Panc1 (cell line): ENCODE measurements at regions of chr9 and their contacts with region 1.

Region 1: DNA sequence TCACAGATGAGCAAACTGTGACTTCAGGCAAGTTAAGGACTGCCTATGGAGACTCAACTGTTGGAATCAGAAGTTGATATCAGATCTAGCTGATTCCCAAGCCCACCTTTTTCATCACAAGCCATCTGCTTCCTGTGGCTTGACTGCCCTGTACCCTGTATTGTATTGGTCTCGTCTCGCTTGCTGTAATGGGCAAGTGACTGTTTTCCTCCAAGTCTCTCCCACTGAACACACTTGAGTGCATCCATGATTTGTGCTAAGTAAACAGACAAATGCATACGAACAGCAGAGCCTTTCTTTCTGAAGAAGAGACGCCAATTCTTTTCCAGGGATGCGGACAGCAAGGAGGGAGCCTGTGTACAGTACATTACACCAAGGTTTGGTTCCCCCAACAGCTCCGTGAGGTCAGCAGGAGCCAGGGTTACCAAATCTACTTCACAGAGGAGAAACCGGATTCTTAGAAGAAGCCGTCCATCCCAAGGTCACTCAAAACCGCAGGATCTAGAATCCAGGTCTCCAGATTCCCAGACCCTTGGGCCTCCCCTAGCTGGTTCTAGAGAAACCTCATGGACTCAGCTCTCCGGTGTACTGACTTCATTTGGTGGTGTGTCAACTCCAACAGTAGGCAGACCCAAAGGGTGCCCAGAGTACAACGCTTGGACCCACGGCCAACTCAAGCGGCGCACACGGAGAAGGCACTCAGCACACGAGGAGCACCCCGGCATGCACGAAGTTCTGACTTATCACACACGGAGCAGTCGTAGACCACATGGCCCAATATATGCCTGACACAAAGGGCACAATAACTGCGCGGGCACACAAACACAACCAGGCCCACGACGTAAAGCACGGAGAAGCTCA is 1.1 kb downstream of the BAG1 start:
- DNase-seq: no peak
- ATAC-seq: peak; percentile 7
- H3K4me3 ChIP-seq: peak overlapping the region; percentile 92 to 96
- H3K27ac ChIP-seq: peak overlapping the region; percentile 92
- H3K4me1 ChIP-seq: peaks cover 15% of the 10 kb centered on the region
- H3K27me3 ChIP-seq: no peaks in the 10 kb centered on the region
- CTCF ChIP-seq: no peak

Region 2: GRCh38 chr9:33225319-33226149 is 37.8 kb before region 1 on chr9:
- CTCF ChIA-PET with region 1: interaction called, 15 read pairs
- POLR2A ChIA-PET with region 1: no interaction called
- in situ Hi-C with region 1: no loop called
- intact Hi-C with region 1: no loop called
- DNase-seq: peak; percentile 66
- ATAC-seq: peak; percentile 64
- H3K4me3 ChIP-seq: no peak overlapping the region
- H3K27ac ChIP-seq: no peak overlapping the region
- H3K4me1 ChIP-seq: 0 out of 2 replicates have a peak, but pooled peaks cover 2% of the 10 kb centered on the region
- H3K27me3 ChIP-seq: no peaks in the 10 kb centered on the region; the same call in 1 of the 2 replicates
- CTCF ChIP-seq: peak; percentile 78

Region 3: GRCh38 chr9:34637356-34638137 is 1374.2 kb after region 1 on chr9 and contains the start of gene SIGMAR1:
- CTCF ChIA-PET with region 1: no interaction called
- POLR2A ChIA-PET with region 1: no interaction called
- in situ Hi-C with region 1: no loop called
- intact Hi-C with region 1: no loop called
- DNase-seq: peak; percentile 51
- ATAC-seq: peak; percentile 94
- H3K4me3 ChIP-seq: peak within 1 kb of the TSS; percentile 70 to 94
- H3K27ac ChIP-seq: peak within 1 kb of the TSS; percentile 98
- H3K4me1 ChIP-seq: peaks cover 13% of the 10 kb centered on the region
- H3K27me3 ChIP-seq: no peaks in the 10 kb centered on the region
- CTCF ChIP-seq: no peak
- total RNA-seq, gene SIGMAR1: 131 TPM